B cell (primary cell): ENCODE measurements at regions of chr1 and their contacts with region 1.

Region 1: GRCh38 chr1:100351095-100351891 is 1.0 kb upstream of the CDC14A start:
- DNase-seq: peak; percentile 91
- ATAC-seq: peak; percentile 58
- H3K4me3 ChIP-seq: peak overlapping the region; percentile 85 to 99 (median 97)
- H3K4me3 Mint-ChIP-seq: peak overlapping the region; percentile 91
- H3K27ac ChIP-seq: peak overlapping the region; percentile 52 to 87
- H3K27ac Mint-ChIP-seq: peak overlapping the region; percentile 92
- H3K4me1 ChIP-seq: peaks cover 10 to 16% of the 10 kb centered on the region in 2 donors
- H3K4me1 Mint-ChIP-seq: peaks cover 37% of the 10 kb centered on the region
- H3K27me3 ChIP-seq: no peaks in the 10 kb centered on the region
- H3K27me3 Mint-ChIP-seq: no peaks in the 10 kb centered on the region
- CTCF ChIP-seq: no peak

Region 2: DNA sequence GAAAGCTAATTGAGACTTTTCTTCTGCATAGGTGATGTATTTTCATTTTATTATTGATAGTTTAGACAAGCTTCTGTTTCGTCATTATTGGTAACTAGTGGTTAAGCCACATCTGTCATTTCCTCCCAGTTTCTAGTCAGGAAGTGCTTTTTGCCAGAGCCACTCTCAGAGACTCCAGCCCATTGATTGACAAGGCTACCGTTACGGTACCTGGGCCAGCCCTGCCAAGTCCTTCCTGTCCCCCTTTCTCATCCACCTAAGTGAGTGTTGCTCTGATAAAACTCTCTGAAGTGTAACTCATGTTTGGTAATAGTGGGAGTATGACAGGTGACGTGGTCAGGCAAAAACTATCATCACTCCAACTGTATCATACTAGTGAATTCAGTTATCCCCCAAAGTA is 530.7 kb before region 1 on chr1:
- CTCF ChIA-PET with region 1: no interaction called
- POLR2A ChIA-PET with region 1: no interaction called
- intact Hi-C with region 1: no loop called
- DNase-seq: no peak
- ATAC-seq: no peak
- H3K4me3 ChIP-seq: no peak overlapping the region
- H3K4me3 Mint-ChIP-seq: no peak overlapping the region
- H3K27ac ChIP-seq: no peak overlapping the region
- H3K27ac Mint-ChIP-seq: no peak overlapping the region
- H3K4me1 ChIP-seq: peaks cover 2 to 4% of the 10 kb centered on the region in 2 donors
- H3K4me1 Mint-ChIP-seq: peaks cover 6% of the 10 kb centered on the region
- H3K27me3 ChIP-seq: no peaks in the 10 kb centered on the region
- H3K27me3 Mint-ChIP-seq: peaks cover 7% of the 10 kb centered on the region
- CTCF ChIP-seq: no peak

Region 3: DNA sequence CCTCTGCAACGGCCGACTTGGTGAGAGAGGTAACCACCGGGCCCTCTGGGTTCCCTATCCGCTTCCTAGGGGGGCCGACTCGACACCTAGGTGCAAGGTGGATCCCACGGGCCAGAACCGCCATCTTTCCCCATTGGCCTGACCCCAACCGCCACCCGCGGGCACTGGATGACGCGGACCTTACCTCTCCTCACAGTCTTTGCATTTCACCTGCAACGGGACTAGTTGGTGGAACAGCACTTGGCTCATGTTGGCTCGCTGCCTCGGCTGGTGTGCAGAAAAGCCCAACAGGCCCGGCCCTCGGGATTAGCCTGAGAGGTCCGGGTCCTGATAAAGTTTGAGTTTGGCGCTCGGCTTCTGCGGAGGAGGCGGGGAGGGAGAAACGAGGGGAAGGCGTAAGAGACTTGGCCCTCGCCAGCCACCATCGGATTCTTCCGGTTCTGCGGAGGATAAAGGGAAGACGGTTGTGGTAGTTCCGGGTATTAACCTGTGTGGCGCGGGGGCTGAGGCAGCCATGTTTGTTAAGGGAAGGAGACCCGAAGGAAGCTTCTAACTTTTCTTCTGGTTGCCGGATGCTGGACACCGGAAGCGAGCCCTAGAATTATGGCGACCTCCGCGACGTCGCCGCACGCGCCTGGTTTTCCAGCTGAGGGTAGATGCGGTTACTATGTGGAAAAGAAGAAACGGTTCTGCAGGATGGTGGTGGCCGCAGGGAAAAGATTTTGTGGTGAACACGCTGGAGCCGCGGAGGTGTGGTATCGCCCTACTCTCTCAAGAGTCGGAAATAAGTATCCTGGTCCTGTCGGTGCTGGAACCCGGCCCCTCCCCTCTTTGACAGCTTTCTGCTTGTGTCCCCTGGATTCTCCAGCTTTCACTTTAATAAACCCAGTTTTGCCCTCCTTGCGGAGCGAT is 218.5 kb before region 1 on chr1 and contains the starts of genes SASS6 and TRMT13:
- CTCF ChIA-PET with region 1: no interaction called
- POLR2A ChIA-PET with region 1: no interaction called
- intact Hi-C with region 1: loop called (anchors 1 kb)
- DNase-seq: peak; percentile 96
- ATAC-seq: peak; percentile 98
- H3K4me3 ChIP-seq: peak within 1 kb of the TSS; percentile 81 to 95 (median 87)
- H3K4me3 Mint-ChIP-seq: peak within 1 kb of the TSS; percentile 98
- H3K27ac ChIP-seq: peak within 1 kb of the TSS; percentile 59 to 72
- H3K27ac Mint-ChIP-seq: peak within 1 kb of the TSS; percentile 96
- H3K4me1 ChIP-seq: peaks cover 18 to 20% of the 10 kb centered on the region in 2 donors
- H3K4me1 Mint-ChIP-seq: peaks cover 37% of the 10 kb centered on the region
- H3K27me3 ChIP-seq: no peaks in the 10 kb centered on the region
- H3K27me3 Mint-ChIP-seq: no peaks in the 10 kb centered on the region
- CTCF ChIP-seq: no peak
- total RNA-seq, gene SASS6: 7.0 and 8.0 TPM in 2 replicates
- total RNA-seq, gene TRMT13: 40.1 and 41.5 TPM in 2 replicates

Region 4: DNA sequence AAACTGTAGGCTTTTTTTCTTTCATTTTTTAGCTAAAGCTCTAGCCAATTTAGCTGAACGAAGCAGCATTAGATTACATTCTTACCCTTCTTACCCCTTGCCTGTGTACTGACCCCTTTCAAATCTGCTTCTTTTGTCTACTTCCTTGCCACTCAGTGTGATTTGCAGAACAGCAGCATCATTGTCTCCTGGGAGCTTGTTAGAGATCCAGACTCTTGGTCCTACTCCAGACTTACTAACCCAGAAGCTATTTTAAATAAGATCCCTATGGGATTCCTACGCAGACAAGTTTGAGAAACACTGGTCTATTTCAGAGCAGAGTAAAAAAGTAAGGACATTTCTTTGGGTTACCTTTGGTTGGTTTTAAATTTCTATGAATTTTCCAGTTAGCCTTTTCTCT is 187.1 kb before region 1 on chr1:
- CTCF ChIA-PET with region 1: no interaction called
- POLR2A ChIA-PET with region 1: no interaction called
- intact Hi-C with region 1: no loop called
- DNase-seq: no peak
- ATAC-seq: no peak
- H3K4me3 ChIP-seq: no peak overlapping the region
- H3K4me3 Mint-ChIP-seq: no peak overlapping the region
- H3K27ac ChIP-seq: no peak overlapping the region
- H3K27ac Mint-ChIP-seq: no peak overlapping the region
- H3K4me1 ChIP-seq: no peaks in the 10 kb centered on the region
- H3K4me1 Mint-ChIP-seq: no peaks in the 10 kb centered on the region
- H3K27me3 ChIP-seq: no peaks in the 10 kb centered on the region
- H3K27me3 Mint-ChIP-seq: no peaks in the 10 kb centered on the region
- CTCF ChIP-seq: no peak

Region 5: GRCh38 chr1:100249537-100250257 is 101.6 kb before region 1 on chr1 and contains the start of gene DBT:
- CTCF ChIA-PET with region 1: interaction called, 4 read pairs
- POLR2A ChIA-PET with region 1: interaction called, 12 read pairs
- intact Hi-C with region 1: loop called (anchors 1 kb)
- DNase-seq: peak; percentile 90
- ATAC-seq: peak; percentile 100
- H3K4me3 ChIP-seq: peak within 1 kb of the TSS; percentile 61 to 99 (median 90)
- H3K4me3 Mint-ChIP-seq: no peak within 1 kb of the TSS
- H3K27ac ChIP-seq: peak within 1 kb of the TSS; percentile 68 to 69
- H3K27ac Mint-ChIP-seq: no peak within 1 kb of the TSS
- H3K4me1 ChIP-seq: peaks cover 12 to 15% of the 10 kb centered on the region in 2 donors
- H3K4me1 Mint-ChIP-seq: peaks cover 13% of the 10 kb centered on the region
- H3K27me3 ChIP-seq: no peaks in the 10 kb centered on the region
- H3K27me3 Mint-ChIP-seq: no peaks in the 10 kb centered on the region
- CTCF ChIP-seq: no peak
- total RNA-seq, gene DBT: 12.9 and 15.1 TPM in 2 replicates

Region 6: DNA sequence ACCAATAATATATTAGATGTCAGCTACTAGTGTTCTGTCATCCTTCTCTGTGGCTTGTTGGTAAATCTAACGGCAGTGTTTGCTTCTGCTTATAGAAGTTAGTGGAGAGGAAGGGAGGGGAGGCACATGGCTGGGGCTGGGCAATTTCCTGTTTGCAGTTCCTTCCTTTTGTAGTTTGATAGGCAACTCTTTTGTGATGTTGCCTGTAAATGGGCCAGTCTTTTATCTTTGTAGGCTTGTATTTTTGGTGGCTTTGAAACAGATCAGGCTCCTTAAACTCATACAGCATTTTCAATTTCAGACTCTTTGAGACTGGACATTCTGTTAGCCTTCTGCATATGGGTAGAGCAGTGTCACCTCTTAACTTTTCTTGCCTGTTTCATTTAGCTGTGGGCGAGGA is 49.1 kb after region 1 on chr1:
- CTCF ChIA-PET with region 1: no interaction called
- POLR2A ChIA-PET with region 1: no interaction called
- intact Hi-C with region 1: loop called (anchors 5 kb)
- DNase-seq: peak; percentile 64
- ATAC-seq: peak; percentile 80
- H3K4me3 ChIP-seq: peak overlapping the region in 1 of 5 experiments; percentile 20
- H3K4me3 Mint-ChIP-seq: peak overlapping the region; percentile 53
- H3K27ac ChIP-seq: peak overlapping the region; percentile 26 to 65
- H3K27ac Mint-ChIP-seq: peak overlapping the region; percentile 87
- H3K4me1 ChIP-seq: peaks cover 18 to 27% of the 10 kb centered on the region in 2 donors
- H3K4me1 Mint-ChIP-seq: peaks cover 65% of the 10 kb centered on the region
- H3K27me3 ChIP-seq: no peaks in the 10 kb centered on the region
- H3K27me3 Mint-ChIP-seq: no peaks in the 10 kb centered on the region
- CTCF ChIP-seq: no peak

Region 7: DNA sequence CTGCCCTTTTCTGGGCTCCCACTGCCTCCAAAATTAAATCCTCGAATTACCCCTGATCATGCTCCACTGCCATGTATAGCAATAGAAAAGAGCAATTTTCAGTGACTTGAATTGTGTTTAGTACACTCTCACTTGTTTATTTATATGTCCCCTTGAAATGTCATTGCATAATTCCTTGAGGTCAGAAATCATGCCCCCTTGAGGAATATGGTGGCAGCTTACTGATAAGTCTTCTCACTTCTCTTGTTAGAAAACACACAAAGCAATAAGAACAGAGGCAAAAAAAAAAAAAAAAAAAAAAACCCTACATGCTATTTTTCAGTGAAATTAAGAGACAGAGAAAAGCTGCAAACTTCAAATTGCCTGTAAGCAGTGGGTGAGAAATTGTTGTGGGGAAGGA is 224.1 kb after region 1 on chr1:
- CTCF ChIA-PET with region 1: no interaction called
- POLR2A ChIA-PET with region 1: no interaction called
- intact Hi-C with region 1: no loop called
- DNase-seq: no peak
- ATAC-seq: no peak
- H3K4me3 ChIP-seq: no peak overlapping the region
- H3K4me3 Mint-ChIP-seq: no peak overlapping the region
- H3K27ac ChIP-seq: no peak overlapping the region
- H3K27ac Mint-ChIP-seq: no peak overlapping the region
- H3K4me1 ChIP-seq: no peaks in the 10 kb centered on the region
- H3K4me1 Mint-ChIP-seq: no peaks in the 10 kb centered on the region
- H3K27me3 ChIP-seq: no peaks in the 10 kb centered on the region
- H3K27me3 Mint-ChIP-seq: peaks cover 12% of the 10 kb centered on the region
- CTCF ChIP-seq: no peak

Region 8: GRCh38 chr1:102241431-102242338 is 1890.4 kb after region 1 on chr1:
- CTCF ChIA-PET with region 1: no interaction called
- POLR2A ChIA-PET with region 1: no interaction called
- intact Hi-C with region 1: no loop called
- DNase-seq: no peak
- ATAC-seq: no peak
- H3K4me3 ChIP-seq: no peak overlapping the region
- H3K4me3 Mint-ChIP-seq: no peak overlapping the region
- H3K27ac ChIP-seq: no peak overlapping the region
- H3K27ac Mint-ChIP-seq: no peak overlapping the region
- H3K4me1 ChIP-seq: no peaks in the 10 kb centered on the region
- H3K4me1 Mint-ChIP-seq: no peaks in the 10 kb centered on the region
- H3K27me3 ChIP-seq: no peaks in the 10 kb centered on the region
- H3K27me3 Mint-ChIP-seq: no peaks in the 10 kb centered on the region
- CTCF ChIP-seq: no peak